ENCODE measurements at regions of chrX and their contacts with region 1.

Region 1: GRCh38 chrX:68828740-68829552 is at the start of gene EFNB1:
- DNase-seq: peak; percentile 90 to 92
- ATAC-seq: peak; percentile 90 to 97 (median 93)
- H3K4me3 ChIP-seq: peak within 1 kb of the TSS; percentile 47 to 90 (median 84)
- H3K27ac ChIP-seq: peak within 1 kb of the TSS; percentile 50 to 90 (median 87)
- H3K4me1 ChIP-seq: peaks cover 0 to 28% (median 10%) of the 10 kb centered on the region in 9 donors
- H3K27me3 ChIP-seq: peaks cover 0 to 63% (median 0%) of the 10 kb centered on the region in 7 donors
- CTCF ChIP-seq: no peak
- total RNA-seq, gene EFNB1: 10.8 to 45.1 (median 16.5) TPM

Region 2: GRCh38 chrX:68072016-68072415 is 756.9 kb before region 1 on chrX:
- intact Hi-C with region 1: no loop called
- DNase-seq: no peak
- ATAC-seq: no peak
- H3K4me3 ChIP-seq: no peak overlapping the region
- H3K27ac ChIP-seq: no peak overlapping the region
- H3K4me1 ChIP-seq: no peaks in the 10 kb centered on the region
- H3K27me3 ChIP-seq: no peaks in the 10 kb centered on the region
- CTCF ChIP-seq: no peak

Region 3: DNA sequence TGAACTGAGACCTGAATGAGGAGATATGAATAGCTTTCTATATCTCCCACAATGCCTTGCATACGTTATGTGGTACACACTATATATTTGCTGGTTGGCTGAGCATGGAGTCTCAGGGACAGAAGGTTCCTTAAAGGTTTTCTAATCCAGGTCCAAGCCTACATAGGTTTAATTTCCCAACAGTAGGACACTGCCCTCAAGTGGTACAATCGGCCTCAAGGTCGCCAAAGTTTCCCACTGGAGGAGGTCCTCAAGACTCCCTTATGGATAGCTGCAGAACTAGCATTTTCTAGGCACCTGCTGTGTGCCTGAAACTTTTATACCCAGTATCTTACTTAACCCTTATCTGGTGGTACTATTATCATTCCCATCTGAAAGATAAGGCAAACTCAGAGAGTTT is 21.1 kb before region 1 on chrX:
- intact Hi-C with region 1: no loop called
- DNase-seq: no peak
- ATAC-seq: peak; percentile 35 to 81 (median 64)
- H3K4me3 ChIP-seq: no peak overlapping the region
- H3K27ac ChIP-seq: no peak overlapping the region
- H3K4me1 ChIP-seq: peaks cover 0 to 3% (median 0%) of the 10 kb centered on the region in 9 donors
- H3K27me3 ChIP-seq: peaks cover 0 to 49% (median 0%) of the 10 kb centered on the region in 7 donors
- CTCF ChIP-seq: peak; percentile 27 to 64 (median 51)

Region 4: DNA sequence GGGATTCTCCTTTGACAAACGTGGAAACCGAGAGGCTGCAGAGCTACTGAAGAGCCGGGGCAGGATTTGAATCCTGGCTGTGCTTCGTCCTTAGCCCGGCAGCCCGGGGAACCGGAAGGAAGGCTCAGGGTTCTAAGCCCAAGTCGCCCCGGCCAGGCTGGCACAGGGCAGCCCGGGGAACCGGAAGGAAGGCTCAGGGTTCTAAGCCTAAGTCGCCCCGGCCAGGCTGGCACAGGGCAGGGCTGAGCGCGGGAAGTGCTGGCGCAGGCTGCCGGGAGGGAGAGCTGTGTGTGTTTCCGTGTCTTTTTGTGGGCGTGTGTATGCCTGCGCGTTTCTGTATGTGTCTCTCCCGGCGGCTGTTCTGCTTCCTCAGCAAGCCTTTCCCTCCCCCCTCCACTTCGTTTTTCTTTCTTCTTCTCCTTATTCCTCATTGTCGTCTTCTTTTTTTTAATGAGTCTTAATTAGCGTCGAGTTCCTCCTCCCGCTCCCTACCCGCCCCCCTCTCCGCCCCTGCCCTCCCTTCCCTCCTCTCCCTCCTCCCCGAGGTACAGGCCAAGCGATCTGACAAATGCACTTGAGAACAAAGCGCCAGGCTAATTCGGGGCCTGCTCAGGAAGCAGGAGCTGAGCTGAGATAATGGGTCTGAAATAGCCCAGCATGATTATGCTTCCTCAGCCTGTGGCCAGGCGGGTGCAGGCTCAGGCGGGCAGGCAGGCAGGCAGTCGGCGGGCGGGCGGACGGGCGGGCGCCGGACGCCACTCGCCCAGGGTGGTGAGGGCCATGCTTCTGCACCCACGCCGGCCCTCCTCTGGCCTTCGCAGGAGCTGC is 65.8 kb after region 1 on chrX:
- intact Hi-C with region 1: loop called in 6 of 10 experiments (anchors 2 to 10 kb)
- DNase-seq: peak; percentile 55 to 77
- ATAC-seq: peak; percentile 86 to 94 (median 91)
- H3K4me3 ChIP-seq: peak overlapping the region in 9 of 10 donors; percentile 6 to 41 (median 22)
- H3K27ac ChIP-seq: peak overlapping the region; percentile 88 to 93 (median 90)
- H3K4me1 ChIP-seq: peaks cover 11 to 53% (median 37%) of the 10 kb centered on the region in 9 donors
- H3K27me3 ChIP-seq: peaks cover 0 to 17% (median 0%) of the 10 kb centered on the region in 7 donors
- CTCF ChIP-seq: no peak

Region 5: GRCh38 chrX:68989865-68990606 is 161.1 kb after region 1 on chrX:
- intact Hi-C with region 1: loop called in 3 of 10 experiments (anchors 5 to 10 kb)
- DNase-seq: peak; percentile 25 to 51
- ATAC-seq: peak; percentile 74 to 94 (median 82)
- H3K4me3 ChIP-seq: no peak overlapping the region
- H3K27ac ChIP-seq: peak overlapping the region in 6 of 10 donors; percentile 7 to 48 (median 26)
- H3K4me1 ChIP-seq: peaks cover 0 to 31% (median 18%) of the 10 kb centered on the region in 9 donors
- H3K27me3 ChIP-seq: peaks cover 0 to 5% (median 0%) of the 10 kb centered on the region in 7 donors
- CTCF ChIP-seq: no peak

Region 6: DNA sequence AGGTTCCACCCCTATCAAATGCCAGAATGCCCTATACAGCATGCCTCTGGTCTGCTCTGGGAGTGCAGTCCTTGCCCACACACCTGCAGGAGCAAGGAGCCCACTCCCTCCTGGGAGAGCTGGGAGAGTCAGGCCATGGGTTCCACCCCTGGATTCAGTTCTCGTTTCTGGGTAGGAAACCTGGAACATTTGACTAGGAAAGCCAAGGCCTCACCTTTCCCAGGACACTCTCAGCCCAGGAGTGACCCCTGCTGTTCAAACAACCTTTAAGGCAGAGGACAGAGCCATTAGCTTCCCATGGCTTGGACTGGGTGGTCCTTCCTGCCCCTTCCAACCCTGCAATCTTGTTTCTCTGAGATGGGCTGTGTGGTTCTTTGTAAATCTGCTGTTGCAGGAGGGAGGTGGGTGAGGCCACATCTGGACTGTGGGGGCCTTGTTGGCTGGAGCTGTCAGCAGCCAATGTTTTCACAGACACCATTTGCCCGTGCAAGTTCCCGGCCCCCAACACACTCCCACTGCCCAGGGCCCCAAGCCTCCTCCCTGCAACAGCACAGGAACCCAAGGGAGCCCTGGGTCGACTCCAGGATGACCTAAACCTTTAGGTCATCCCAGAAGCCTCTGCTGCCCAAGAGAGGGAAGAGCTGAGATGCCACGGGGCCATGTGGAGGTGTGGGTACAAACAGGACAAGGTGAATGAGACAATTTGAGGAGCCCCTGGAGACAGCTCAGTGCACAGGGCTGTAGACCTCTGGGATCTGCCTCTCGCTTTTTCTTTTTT is 231.9 kb after region 1 on chrX:
- intact Hi-C with region 1: loop called (anchors 1 to 10 kb)
- DNase-seq: peak; percentile 22 to 60
- ATAC-seq: peak; percentile 79 to 89 (median 82)
- H3K4me3 ChIP-seq: no peak overlapping the region
- H3K27ac ChIP-seq: no peak overlapping the region
- H3K4me1 ChIP-seq: peaks cover 0 to 6% (median 0%) of the 10 kb centered on the region in 9 donors
- H3K27me3 ChIP-seq: peaks cover 0 to 8% (median 0%) of the 10 kb centered on the region in 7 donors
- CTCF ChIP-seq: peak in 8 of 9 donors; percentile 18 to 67 (median 56)

Region 7: DNA sequence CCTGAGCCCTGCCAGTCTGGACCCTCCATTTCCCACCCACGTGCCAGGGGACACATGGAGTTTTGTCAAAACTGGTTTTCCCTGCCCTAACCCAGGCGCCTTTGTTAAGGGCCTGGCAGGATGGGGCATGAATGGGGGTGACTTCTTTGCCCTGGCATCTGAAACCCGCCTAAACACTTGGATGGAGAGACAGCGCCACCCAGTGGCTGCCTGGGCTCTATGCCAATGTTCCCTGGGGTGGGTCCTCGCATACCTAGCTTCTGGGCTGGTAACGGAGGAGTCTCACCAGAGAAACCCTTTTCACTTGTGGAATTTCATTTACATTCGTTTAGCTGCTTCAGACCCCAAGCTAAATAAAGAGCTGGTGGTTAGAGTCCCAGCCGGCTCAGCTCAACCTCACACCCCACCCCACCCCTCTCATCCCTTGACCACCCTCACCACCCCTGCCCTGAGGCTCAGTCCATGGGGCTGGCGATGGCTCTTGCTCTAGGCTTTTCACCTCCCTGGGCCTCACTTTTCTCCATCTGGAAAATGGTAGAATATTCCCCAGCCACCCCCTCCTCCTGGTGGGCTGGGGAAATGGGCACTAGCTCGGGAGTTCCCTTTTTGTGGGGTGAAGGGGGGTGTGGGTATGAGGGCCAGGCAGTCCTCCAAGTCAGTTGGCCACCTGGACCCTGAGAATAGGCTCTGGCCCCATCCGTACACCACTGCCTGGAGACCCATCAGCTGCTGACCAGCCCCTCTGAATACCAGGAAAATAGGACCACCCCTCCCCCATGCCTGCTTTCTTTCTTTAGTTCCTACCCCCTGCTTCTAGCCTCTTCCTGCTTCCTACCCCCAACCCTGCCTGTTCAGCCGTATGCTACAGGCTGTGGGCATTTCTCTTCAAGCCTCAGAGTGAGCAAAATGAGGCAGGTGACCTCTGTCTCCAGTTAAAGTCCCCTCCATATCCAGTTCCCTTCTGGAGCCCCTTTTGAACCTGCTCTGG is 393.5 kb after region 1 on chrX:
- intact Hi-C with region 1: loop called (anchors 1 to 5 kb)
- DNase-seq: peak; percentile 49 to 73
- ATAC-seq: peak; percentile 75 to 90 (median 80)
- H3K4me3 ChIP-seq: no peak overlapping the region
- H3K27ac ChIP-seq: no peak overlapping the region
- H3K4me1 ChIP-seq: peaks cover 0 to 7% (median 0%) of the 10 kb centered on the region in 9 donors
- H3K27me3 ChIP-seq: peaks cover 0 to 30% (median 0%) of the 10 kb centered on the region in 7 donors
- CTCF ChIP-seq: peak; percentile 49 to 80 (median 76)

Region 8: DNA sequence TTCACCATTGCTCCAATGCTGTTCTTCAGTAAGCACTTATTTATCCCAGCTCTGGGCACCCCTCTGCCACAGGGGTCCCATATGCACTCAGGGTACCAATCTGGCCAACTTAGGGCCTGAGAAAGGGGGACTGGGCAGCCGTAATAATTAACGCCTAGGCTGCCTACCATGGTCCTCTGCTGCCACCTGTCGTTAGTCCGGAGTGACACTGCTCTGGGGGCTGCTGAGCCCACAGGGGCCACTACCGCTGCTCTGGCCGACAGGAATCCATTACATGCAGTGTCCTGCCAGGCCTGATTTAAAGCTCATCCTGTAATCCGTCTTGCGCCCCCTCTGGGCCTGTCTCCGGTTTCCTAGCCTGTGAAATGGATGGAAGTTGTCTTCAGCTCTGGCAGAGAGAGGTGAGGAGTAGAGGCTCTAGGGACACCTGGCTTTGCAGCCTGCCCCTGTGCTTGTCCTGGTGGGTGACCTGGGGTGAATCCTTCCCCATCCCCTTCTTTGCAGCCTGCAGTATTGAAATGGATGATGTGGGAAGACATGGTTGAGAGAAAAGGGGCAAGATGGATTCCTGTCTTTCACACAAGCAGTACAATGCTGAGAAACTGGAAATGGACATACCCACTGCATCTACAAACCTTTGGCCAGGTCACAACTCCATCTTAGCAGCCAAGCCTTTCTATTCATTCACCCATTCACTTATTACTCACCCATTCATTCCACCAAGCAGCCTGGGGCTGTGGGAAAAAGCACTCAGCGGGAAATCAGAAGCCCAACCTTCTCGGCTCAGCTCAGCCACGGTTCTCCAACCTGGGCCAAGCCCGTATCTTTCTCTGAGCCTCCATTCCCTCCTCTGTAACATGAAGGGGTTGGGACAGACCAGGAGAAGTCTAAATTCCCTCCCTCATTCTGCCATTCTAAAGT is 558.9 kb after region 1 on chrX:
- intact Hi-C with region 1: loop called (anchors 5 to 10 kb)
- DNase-seq: peak; percentile 32 to 33
- ATAC-seq: peak in 6 of 8 donors; percentile 46 to 75 (median 68)
- H3K4me3 ChIP-seq: no peak overlapping the region
- H3K27ac ChIP-seq: no peak overlapping the region
- H3K4me1 ChIP-seq: peaks cover 0 to 4% (median 0%) of the 10 kb centered on the region in 9 donors
- H3K27me3 ChIP-seq: peaks cover 0 to 65% (median 0%) of the 10 kb centered on the region in 7 donors
- CTCF ChIP-seq: peak; percentile 23 to 78 (median 70)

Measured in heart right ventricle (tissue), 16 donors.